PC-9 (cell line): ENCODE measurements at regions of chr20 and their contacts with region 1.

Region 1: GRCh38 chr20:62143118-62143973 is at the starts of genes PSMA7 and SS18L1:
- DNase-seq: peak; percentile 65 to 89
- H3K4me3 ChIP-seq: peak within 1 kb of the TSS; percentile 98
- H3K27ac ChIP-seq: peak within 1 kb of the TSS; percentile 42
- H3K4me1 ChIP-seq: peaks cover 26% of the 10 kb centered on the region
- H3K27me3 ChIP-seq: no peaks in the 10 kb centered on the region
- CTCF ChIP-seq: no peak
- total RNA-seq, gene PSMA7: 367 and 391 TPM in 2 replicates
- total RNA-seq, gene SS18L1: 22.4 and 29.0 TPM in 2 replicates

Region 2: GRCh38 chr20:62121776-62122631 is 21.3 kb before region 1 on chr20 and contains the start of gene LSM14B:
- CTCF ChIA-PET with region 1: no interaction called
- POLR2A ChIA-PET with region 1: interaction called, 7 read pairs
- intact Hi-C with region 1: loop called (anchors 1 kb)
- DNase-seq: peak; percentile 86 to 99
- H3K4me3 ChIP-seq: peak within 1 kb of the TSS; percentile 80
- H3K27ac ChIP-seq: peak within 1 kb of the TSS; percentile 95
- H3K4me1 ChIP-seq: peaks cover 15% of the 10 kb centered on the region
- H3K27me3 ChIP-seq: peaks cover 29% of the 10 kb centered on the region
- CTCF ChIP-seq: no peak
- total RNA-seq, gene LSM14B: 61.5 and 67.2 TPM in 2 replicates

Region 3: DNA sequence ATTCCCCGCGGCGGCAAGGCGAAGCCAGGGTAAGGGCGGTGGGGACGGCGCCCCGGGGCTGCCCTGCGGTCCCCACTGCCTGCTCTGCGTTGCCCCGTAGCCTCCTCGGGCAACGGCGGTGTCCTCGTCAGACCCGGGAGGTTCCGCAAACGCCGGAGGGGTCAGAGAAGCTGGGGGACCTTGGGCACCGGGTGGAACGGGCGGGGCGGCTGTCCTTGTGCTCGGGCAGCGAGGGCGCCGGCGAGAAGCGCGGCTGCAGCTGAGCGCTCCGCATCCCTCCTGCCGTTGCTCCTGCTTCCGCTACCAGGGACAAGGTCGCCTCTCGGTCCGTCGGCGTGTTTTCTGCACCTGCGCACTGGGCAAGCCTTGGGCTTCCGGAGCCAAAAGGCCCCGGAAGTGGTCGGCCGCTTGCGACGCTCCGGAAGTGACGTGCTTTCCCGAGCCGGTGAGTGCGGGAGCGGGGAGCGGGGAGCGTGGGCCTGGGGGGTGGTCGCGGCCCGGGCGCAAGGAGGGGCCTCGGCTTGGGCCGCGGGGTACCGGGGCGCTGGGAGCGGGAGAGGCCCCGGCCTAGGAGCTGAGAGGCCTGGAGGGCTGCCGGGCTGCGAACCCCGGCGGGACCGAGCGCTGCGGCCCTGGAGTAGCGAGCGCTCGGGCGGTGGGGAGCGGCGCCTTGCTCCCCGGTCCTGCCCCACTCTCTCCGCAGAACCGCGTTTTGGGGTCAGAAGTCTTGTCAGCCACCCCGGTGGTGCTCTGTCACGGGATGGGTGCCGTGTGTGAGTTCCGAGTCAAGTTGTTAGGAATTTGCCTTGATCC is 39.5 kb after region 1 on chr20 and contains the start of gene MTG2:
- CTCF ChIA-PET with region 1: no interaction called
- POLR2A ChIA-PET with region 1: no interaction called
- intact Hi-C with region 1: loop called (anchors 1 kb)
- DNase-seq: peak; percentile 92 to 93
- H3K4me3 ChIP-seq: peak within 1 kb of the TSS; percentile 81
- H3K27ac ChIP-seq: peak within 1 kb of the TSS; percentile 58
- H3K4me1 ChIP-seq: peaks cover 20% of the 10 kb centered on the region
- H3K27me3 ChIP-seq: no peaks in the 10 kb centered on the region
- CTCF ChIP-seq: no peak
- total RNA-seq, gene MTG2: 58.1 and 62.5 TPM in 2 replicates

Region 4: DNA sequence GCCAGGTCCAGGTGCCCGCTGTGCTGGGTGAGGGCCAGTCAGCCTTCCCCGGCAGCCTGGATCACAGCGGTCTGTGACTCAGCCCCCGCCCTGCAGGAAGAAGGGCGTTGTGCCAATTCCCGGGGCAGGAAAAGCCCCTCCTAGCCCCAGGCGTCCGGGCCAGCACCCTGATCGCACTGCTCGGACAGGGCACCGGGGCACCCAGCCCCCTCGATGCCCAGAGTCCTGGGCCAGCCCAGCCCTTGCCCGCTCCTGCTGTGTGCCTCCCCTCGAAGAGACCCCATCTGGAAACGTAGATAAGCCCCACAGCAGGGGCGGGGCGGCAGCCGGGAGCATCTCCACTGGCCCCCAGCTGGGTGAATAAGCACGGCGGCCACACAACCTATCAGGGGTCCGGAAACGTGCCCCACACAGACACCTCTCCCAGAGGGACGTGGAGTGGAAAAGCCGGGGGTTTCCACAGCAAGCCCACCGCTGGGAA is 213.9 kb after region 1 on chr20:
- CTCF ChIA-PET with region 1: no interaction called
- POLR2A ChIA-PET with region 1: no interaction called
- intact Hi-C with region 1: loop called (anchors 5 kb)
- DNase-seq: peak; percentile 74 to 96
- H3K4me3 ChIP-seq: peak overlapping the region; percentile 55
- H3K27ac ChIP-seq: peak overlapping the region; percentile 86
- H3K4me1 ChIP-seq: peaks cover 92% of the 10 kb centered on the region
- H3K27me3 ChIP-seq: no peaks in the 10 kb centered on the region
- CTCF ChIP-seq: no peak